WTC11 (cell line): ENCODE measurements at regions of chr1 and their contacts with region 1.

Region 1: DNA sequence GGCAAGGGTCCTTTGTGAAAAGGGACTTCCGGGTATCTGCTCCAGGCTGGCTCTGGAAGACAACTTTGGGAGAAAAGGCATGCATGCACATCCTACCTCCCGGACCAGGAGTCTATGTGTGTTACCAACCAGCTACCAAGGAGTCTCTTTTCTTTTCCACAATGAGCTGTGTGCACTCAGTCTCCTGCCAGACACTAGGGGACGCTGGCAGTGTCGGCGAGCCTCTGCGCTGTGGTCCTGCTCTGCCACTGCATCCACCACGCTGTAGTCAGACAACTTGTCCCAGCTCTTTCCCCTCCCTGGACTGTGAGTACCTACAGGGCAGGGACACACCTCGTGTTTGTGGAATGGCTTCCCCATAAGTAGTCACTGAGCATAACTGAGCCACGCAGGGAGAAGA is 5.1 kb upstream of the SSR2 start:
- DNase-seq: peak; percentile 72
- ATAC-seq: peak; percentile 99
- H3K4me3 Mint-ChIP-seq: no peak overlapping the region
- H3K27ac Mint-ChIP-seq: no peak overlapping the region
- H3K4me1 Mint-ChIP-seq: peaks cover 5% of the 10 kb centered on the region
- H3K27me3 Mint-ChIP-seq: peaks cover 28% of the 10 kb centered on the region
- CTCF ChIP-seq: no peak

Region 2: GRCh38 chr1:155934097-155934935 is 91.6 kb before region 1 on chr1 and contains the start of gene KHDC4:
- CTCF ChIA-PET with region 1: interaction called, 11 read pairs
- POLR2A ChIA-PET with region 1: no interaction called
- DNase-seq: peak; percentile 88
- ATAC-seq: peak; percentile 92
- H3K4me3 Mint-ChIP-seq: no peak within 1 kb of the TSS
- H3K27ac Mint-ChIP-seq: no peak within 1 kb of the TSS
- H3K4me1 Mint-ChIP-seq: peaks cover 20% of the 10 kb centered on the region
- H3K27me3 Mint-ChIP-seq: no peaks in the 10 kb centered on the region
- CTCF ChIP-seq: no peak
- total RNA-seq, gene KHDC4: 46.0 to 64.4 TPM (median 59.8 TPM) in 3 replicates

Region 3: GRCh38 chr1:156067262-156067661 is 41.4 kb after region 1 on chr1:
- CTCF ChIA-PET with region 1: interaction called, 74 read pairs
- POLR2A ChIA-PET with region 1: no interaction called
- DNase-seq: no peak
- ATAC-seq: no peak
- H3K4me3 Mint-ChIP-seq: no peak overlapping the region
- H3K27ac Mint-ChIP-seq: no peak overlapping the region
- H3K4me1 Mint-ChIP-seq: peaks cover 36% of the 10 kb centered on the region
- H3K27me3 Mint-ChIP-seq: no peaks in the 10 kb centered on the region
- CTCF ChIP-seq: no peak

Region 4: DNA sequence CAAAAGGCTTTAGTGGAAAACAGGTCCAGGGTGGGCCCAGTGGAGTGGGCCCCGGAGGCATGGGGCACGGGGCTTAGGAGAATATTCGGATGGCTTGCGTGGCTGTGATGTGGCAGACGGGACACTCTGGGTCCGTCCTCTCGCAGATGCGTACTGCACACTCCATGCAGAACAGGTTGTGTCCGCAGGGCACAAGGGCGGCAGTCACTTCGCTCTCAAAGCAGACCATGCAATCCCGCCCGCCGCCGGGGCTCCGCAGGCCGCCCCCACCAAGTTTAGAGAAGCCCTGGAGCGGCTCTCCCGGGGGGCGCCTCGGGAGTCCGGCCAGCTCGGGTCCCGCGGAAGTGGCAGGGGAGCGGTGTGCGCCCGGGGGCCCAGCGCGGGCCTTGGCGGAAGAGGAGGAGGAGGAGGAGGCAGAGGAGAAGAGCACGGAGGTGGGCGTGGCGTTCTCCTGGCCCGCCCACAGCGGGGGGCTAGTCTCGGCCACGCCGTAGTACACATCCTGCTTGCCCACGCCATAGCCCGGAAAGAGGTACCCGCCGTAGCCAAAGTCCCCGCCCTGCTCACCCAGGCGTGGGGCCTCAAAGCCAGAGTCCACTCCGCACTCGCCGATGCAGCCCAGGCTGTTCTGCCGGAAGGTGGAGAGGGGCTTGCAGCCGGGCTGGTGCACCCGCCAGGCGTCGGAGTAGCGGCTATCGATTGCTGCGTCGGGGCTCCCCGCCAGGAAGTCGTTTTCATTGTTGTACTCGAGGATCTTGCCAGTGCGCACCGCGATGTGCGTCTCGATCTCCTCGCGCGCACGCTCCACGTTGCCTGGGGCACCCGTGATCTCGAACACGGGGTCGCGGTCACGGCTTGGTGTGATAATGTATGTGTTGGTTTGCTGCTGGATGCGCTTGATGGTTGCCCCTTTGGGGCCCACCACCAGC is 50.9 kb after region 1 on chr1:
- CTCF ChIA-PET with region 1: interaction called, 27 read pairs
- POLR2A ChIA-PET with region 1: no interaction called
- DNase-seq: peak; percentile 65
- ATAC-seq: peak; percentile 21
- H3K4me3 Mint-ChIP-seq: peak overlapping the region; percentile 96
- H3K27ac Mint-ChIP-seq: peak overlapping the region; percentile 53
- H3K4me1 Mint-ChIP-seq: peaks cover 80% of the 10 kb centered on the region
- H3K27me3 Mint-ChIP-seq: no peaks in the 10 kb centered on the region
- CTCF ChIP-seq: no peak